ENCODE measurements at regions of chr17 and their contacts with region 1.

Region 1: DNA sequence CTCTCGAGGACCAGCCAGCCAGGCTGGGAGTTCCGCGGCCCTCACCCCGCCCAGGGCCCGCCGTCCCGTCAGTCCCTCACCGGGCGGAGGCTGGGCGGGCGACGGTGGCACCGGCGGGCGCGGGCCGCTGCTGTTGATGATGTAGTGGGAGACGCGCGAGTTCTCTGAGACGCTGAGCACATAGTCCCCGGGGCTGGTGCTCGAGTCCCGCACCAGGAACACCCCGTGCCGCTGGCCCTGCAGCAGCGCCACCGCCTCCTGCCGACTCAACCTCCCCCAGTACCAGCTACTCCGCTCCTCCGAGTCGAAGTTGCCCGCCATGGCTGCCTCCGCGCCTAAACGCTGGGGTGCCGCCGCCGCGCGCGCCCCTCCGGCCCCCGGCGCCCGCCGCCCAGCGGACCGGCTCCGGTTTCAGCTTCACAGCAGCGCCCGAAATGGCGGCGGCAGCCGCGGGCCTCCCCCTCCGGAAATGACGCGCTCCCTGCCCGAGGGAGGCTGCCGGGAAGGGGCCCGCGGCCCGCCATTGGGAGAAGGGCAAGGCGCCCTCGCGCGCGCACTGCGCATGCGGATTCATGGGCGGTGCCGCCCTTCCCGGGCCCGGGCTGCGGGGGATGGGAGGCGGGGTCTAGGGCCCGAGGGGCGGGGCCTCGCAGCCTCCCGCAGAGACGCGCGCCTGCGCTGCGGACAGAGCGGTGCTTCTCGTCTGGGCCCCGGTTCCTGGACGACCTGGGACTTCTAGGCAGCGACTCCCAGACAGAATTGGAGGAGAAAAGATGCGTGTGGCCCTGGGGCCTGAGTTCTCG is at the start of gene CRK:
- DNase-seq: peak; percentile 96 to 99 (median 98)
- H3K4me3 ChIP-seq: peak within 1 kb of the TSS; percentile 81 to 92
- H3K4me3 Mint-ChIP-seq: peak within 1 kb of the TSS; percentile 88 to 96 (median 93)
- H3K27ac ChIP-seq: peak within 1 kb of the TSS; percentile 94
- H3K27ac Mint-ChIP-seq: peak within 1 kb of the TSS; percentile 80 to 96 (median 95)
- H3K4me1 ChIP-seq: peaks cover 43% of the 10 kb centered on the region
- H3K4me1 Mint-ChIP-seq: peaks cover 28 to 61% (median 45%) of the 10 kb centered on the region in 4 donors
- H3K27me3 ChIP-seq: no peaks in the 10 kb centered on the region
- H3K27me3 Mint-ChIP-seq: peaks cover 0 to 2% of the 10 kb centered on the region in 2 donors
- total RNA-seq, gene CRK: 29.3 to 32.1 TPM

Region 2: GRCh38 chr17:1399679-1400512 is 56.1 kb before region 1 on chr17 and contains the start of gene YWHAE:
- CTCF ChIA-PET with region 1: interaction called, 3 read pairs
- POLR2A ChIA-PET with region 1: interaction called, 13 read pairs
- intact Hi-C with region 1: loop called (anchors 1 kb)
- DNase-seq: peak; percentile 93 to 96 (median 94)
- H3K4me3 ChIP-seq: peak within 1 kb of the TSS; percentile 76 to 100
- H3K4me3 Mint-ChIP-seq: peak within 1 kb of the TSS; percentile 96 to 99 (median 98)
- H3K27ac ChIP-seq: peak within 1 kb of the TSS; percentile 95
- H3K27ac Mint-ChIP-seq: peak within 1 kb of the TSS; percentile 97 to 100 (median 98)
- H3K4me1 ChIP-seq: peaks cover 41% of the 10 kb centered on the region
- H3K4me1 Mint-ChIP-seq: peaks cover 23 to 42% (median 33%) of the 10 kb centered on the region in 4 donors
- H3K27me3 ChIP-seq: no peaks in the 10 kb centered on the region
- H3K27me3 Mint-ChIP-seq: peaks cover 0 to 3% of the 10 kb centered on the region in 2 donors
- total RNA-seq, gene YWHAE: 142 to 143 TPM

Region 3: DNA sequence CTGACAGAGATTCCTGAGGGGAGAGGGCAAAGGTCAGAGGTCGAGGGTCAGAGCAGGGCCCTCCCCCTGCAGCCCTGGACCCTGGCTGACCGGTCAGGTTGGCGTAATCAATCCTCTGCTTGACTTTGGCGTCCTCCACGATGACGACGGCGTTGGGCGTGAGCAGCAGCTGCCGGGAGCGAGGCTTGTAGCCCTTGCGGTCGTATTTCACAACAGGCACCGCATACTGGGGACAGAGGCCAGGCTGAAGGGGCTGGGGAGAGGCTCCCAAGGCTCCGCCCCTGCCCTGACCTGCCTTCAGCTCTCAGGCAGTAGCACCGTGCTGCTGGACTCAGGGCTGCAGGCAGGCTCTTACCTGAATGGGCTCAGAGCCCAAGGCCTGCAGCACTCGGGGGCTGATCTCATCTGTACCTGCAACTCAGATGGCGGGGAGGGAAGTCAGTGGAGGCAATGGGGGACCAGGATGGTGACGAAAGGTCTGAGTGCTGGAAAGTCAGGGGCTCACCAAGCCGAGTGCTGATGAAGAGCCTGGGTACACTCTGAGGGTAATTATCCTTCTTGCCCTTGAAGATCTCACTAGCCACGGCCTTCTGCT is 12.0 kb after region 1 on chr17:
- CTCF ChIA-PET with region 1: no interaction called
- POLR2A ChIA-PET with region 1: no interaction called
- intact Hi-C with region 1: no loop called
- DNase-seq: no peak
- H3K4me3 ChIP-seq: no peak overlapping the region
- H3K4me3 Mint-ChIP-seq: no peak overlapping the region
- H3K27ac ChIP-seq: no peak overlapping the region
- H3K27ac Mint-ChIP-seq: peak overlapping the region in 1 of 7 donors; percentile 70
- H3K4me1 ChIP-seq: peaks cover 8% of the 10 kb centered on the region
- H3K4me1 Mint-ChIP-seq: peaks cover 8 to 23% (median 11%) of the 10 kb centered on the region in 4 donors
- H3K27me3 ChIP-seq: no peaks in the 10 kb centered on the region
- H3K27me3 Mint-ChIP-seq: no peaks in the 10 kb centered on the region

Region 4: DNA sequence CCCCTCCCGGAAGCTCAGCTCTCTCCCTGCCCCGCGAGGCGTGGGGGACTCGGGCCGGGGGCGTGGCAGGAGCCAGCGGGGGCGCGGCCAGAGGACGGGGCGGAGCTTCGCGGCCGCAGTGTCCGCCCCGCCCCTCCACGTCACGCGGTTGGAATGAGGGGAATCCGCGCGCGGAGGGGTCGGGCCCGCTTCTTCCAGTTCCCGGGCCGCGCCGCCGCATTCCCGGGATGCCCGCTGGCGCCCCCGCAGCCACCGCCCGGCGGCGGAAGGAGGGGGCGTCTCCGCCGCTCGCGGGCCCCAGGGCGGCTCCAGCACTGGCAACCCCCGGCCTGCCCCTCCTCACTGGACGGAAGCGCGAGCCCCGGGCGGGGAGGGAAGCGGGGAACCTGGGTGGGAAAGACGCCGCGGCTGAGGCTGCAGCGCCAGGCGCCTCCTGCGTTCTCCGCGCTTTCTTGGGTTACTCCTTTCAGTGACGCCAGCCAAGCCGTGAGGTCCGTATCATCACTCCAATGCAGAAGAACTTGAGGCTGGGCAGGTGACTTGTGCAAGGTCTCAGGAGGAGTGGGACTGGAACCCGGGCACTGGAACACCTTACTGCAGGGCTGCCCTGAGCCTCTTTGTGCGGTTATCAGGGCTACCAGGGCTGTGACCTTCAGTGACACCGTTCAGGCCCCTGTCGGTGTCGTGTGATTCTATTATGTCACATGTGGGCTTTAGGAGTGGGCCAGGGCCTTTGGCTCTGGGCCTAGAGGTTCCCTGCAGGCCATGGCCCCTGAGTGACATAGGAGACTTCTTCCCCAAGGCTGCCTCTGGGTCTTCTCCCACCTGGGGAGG is 32.2 kb after region 1 on chr17:
- CTCF ChIA-PET with region 1: interaction called, 3 read pairs
- POLR2A ChIA-PET with region 1: interaction called, 40 read pairs
- intact Hi-C with region 1: loop called (anchors 1 kb)
- DNase-seq: peak; percentile 66 to 78 (median 71)
- H3K4me3 ChIP-seq: peak overlapping the region; percentile 27 to 54
- H3K4me3 Mint-ChIP-seq: peak overlapping the region; percentile 82 to 91 (median 88)
- H3K27ac ChIP-seq: peak overlapping the region; percentile 72
- H3K27ac Mint-ChIP-seq: peak overlapping the region; percentile 37 to 97 (median 88)
- H3K4me1 ChIP-seq: peaks cover 56% of the 10 kb centered on the region
- H3K4me1 Mint-ChIP-seq: peaks cover 19 to 65% (median 41%) of the 10 kb centered on the region in 4 donors
- H3K27me3 ChIP-seq: no peaks in the 10 kb centered on the region
- H3K27me3 Mint-ChIP-seq: no peaks in the 10 kb centered on the region

Region 5: GRCh38 chr17:1561400-1562175 is 105.6 kb after region 1 on chr17:
- CTCF ChIA-PET with region 1: no interaction called
- POLR2A ChIA-PET with region 1: no interaction called
- intact Hi-C with region 1: loop called (anchors 1 kb)
- DNase-seq: peak in 4 of 5 donors; percentile 32 to 44 (median 36)
- H3K4me3 ChIP-seq: peak overlapping the region; percentile 2 to 17
- H3K4me3 Mint-ChIP-seq: peak overlapping the region; percentile 78 to 89 (median 85)
- H3K27ac ChIP-seq: peak overlapping the region; percentile 59
- H3K27ac Mint-ChIP-seq: peak overlapping the region; percentile 71 to 93 (median 89)
- H3K4me1 ChIP-seq: peaks cover 39% of the 10 kb centered on the region
- H3K4me1 Mint-ChIP-seq: peaks cover 29 to 53% (median 41%) of the 10 kb centered on the region in 4 donors
- H3K27me3 ChIP-seq: no peaks in the 10 kb centered on the region
- H3K27me3 Mint-ChIP-seq: no peaks in the 10 kb centered on the region

Region 6: GRCh38 chr17:1628856-1629646 is 173.1 kb after region 1 on chr17:
- CTCF ChIA-PET with region 1: interaction called, 3 read pairs
- POLR2A ChIA-PET with region 1: interaction called, 4 read pairs
- intact Hi-C with region 1: loop called (anchors 5 kb)
- DNase-seq: peak; percentile 83 to 90 (median 85)
- H3K4me3 ChIP-seq: peak overlapping the region; percentile 57 to 73
- H3K4me3 Mint-ChIP-seq: peak overlapping the region; percentile 87 to 99 (median 92)
- H3K27ac ChIP-seq: peak overlapping the region; percentile 44
- H3K27ac Mint-ChIP-seq: peak overlapping the region; percentile 75 to 96 (median 86)
- H3K4me1 ChIP-seq: peaks cover 22% of the 10 kb centered on the region
- H3K4me1 Mint-ChIP-seq: peaks cover 3 to 27% (median 12%) of the 10 kb centered on the region in 4 donors
- H3K27me3 ChIP-seq: peaks cover 8% of the 10 kb centered on the region
- H3K27me3 Mint-ChIP-seq: peaks cover 1% of the 10 kb centered on the region in 2 donors

Measured in CD4-positive, alpha-beta memory T cell (primary cell).